Activated CD4-positive, alpha-beta T cell treated with anti-CD3 and anti-CD28 coated beads, Interleukin-2, amount 10 ng/mL, durations not matched to agents 7 days and 5 days (primary cell): ENCODE measurements at regions of chr15 and their contacts with region 1.

Region 1: DNA sequence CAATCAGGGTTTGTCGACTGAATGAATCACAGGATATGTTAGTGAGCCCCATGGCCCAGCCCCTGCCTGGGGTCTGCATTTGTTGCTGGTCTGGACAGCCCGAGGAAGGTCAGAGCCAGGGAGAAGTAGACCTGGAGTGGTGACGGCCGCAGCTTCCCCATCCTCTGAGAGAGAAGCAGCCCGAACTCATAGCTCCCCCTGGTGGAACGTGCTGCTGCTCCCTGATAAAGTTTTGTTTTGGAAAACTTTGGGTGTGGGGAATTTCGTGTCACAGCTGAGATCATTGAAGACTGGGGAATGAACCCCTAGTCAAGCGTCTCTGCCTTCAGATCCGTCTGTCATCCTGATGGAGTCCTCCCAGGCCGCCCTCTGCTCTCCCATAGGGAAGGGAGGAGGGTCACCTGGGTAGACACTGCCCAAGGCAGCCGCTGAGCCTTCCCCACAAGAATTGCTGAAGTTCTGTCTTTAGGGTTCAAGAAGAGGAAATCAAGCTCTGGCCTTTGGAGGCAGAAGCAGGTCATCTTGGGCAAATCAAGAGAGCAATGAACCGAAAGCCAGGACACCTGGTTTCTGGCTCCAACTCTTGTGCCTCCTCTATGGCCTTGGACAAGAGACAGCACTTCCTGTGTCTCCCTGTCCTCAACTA is 60.5 kb downstream of the GLDN start:
- DNase-seq: no peak
- H3K4me3 Mint-ChIP-seq: no peak overlapping the region
- H3K27ac Mint-ChIP-seq: no peak overlapping the region
- H3K4me1 Mint-ChIP-seq: no peaks in the 10 kb centered on the region
- H3K27me3 Mint-ChIP-seq: peaks cover 26% of the 10 kb centered on the region

Region 2: GRCh38 chr15:51496246-51496645 is 94.3 kb after region 1 on chr15:
- CTCF ChIA-PET with region 1: no interaction called
- POLR2A ChIA-PET with region 1: interaction called, 11 read pairs
- DNase-seq: no peak
- H3K4me3 Mint-ChIP-seq: no peak overlapping the region
- H3K27ac Mint-ChIP-seq: no peak overlapping the region
- H3K4me1 Mint-ChIP-seq: peaks cover 4% of the 10 kb centered on the region
- H3K27me3 Mint-ChIP-seq: no peaks in the 10 kb centered on the region